ENCODE measurements at regions of chr4 and their contacts with region 1.

Region 1: DNA sequence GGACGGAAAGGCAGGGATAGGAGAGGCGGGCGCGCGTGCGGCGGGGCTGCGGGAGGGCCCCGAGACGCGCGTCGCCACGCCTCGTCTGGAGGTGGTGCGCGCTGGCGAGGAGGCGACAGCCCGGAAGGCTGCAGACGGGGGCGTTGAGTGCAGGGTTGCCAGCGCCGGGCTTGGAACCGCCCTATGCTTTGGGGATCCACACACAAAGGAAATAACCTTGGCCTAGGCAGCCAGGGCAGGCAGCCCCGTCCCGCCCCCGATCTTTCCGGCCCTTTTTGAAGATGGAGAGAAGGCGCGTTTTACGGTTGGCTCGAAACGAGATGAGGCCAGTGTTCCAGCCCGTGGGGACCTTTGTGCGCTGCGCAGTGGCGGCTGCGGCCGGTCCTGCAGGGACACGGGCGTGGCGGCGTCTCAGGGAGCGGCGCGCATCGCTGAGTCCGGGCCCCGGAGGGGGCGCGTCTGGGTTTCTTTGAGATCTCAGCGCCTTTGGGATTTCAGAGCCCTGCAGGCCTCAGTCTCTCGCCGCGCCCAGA is 50.8 kb upstream of the TRIM2 start:
- DNase-seq: peak; percentile 39 to 66 (median 48)
- ATAC-seq: peak in 3 of 4 donors; percentile 75 to 88 (median 85)
- H3K4me3 ChIP-seq: peak overlapping the region; percentile 48 to 68 (median 58)
- H3K27ac ChIP-seq: peak overlapping the region in 1 of 12 donors; percentile 10
- H3K4me1 ChIP-seq: peaks cover 0 to 27% (median 12%) of the 10 kb centered on the region in 12 donors
- H3K27me3 ChIP-seq: peaks cover 0 to 21% (median 0%) of the 10 kb centered on the region in 9 donors
- CTCF ChIP-seq: no peak
- POLR2A ChIP-seq: no peak

Region 2: GRCh38 chr4:151905197-151905596 is 1248.2 kb before region 1 on chr4:
- intact Hi-C with region 1: no loop called
- DNase-seq: no peak
- ATAC-seq: no peak
- H3K4me3 ChIP-seq: no peak overlapping the region
- H3K27ac ChIP-seq: no peak overlapping the region
- H3K4me1 ChIP-seq: no peaks in the 10 kb centered on the region
- H3K27me3 ChIP-seq: no peaks in the 10 kb centered on the region
- CTCF ChIP-seq: no peak
- POLR2A ChIP-seq: no peak

Region 3: GRCh38 chr4:152415980-152416379 is 737.4 kb before region 1 on chr4:
- intact Hi-C with region 1: no loop called
- DNase-seq: no peak
- ATAC-seq: no peak
- H3K4me3 ChIP-seq: no peak overlapping the region
- H3K27ac ChIP-seq: no peak overlapping the region
- H3K4me1 ChIP-seq: no peaks in the 10 kb centered on the region
- H3K27me3 ChIP-seq: no peaks in the 10 kb centered on the region
- CTCF ChIP-seq: no peak
- POLR2A ChIP-seq: no peak

Region 4: GRCh38 chr4:153204247-153205027 is 51.0 kb after region 1 on chr4 and contains the start of gene TRIM2:
- intact Hi-C with region 1: loop called in 2 of 10 experiments (anchors 5 kb)
- DNase-seq: peak; percentile 67 to 82 (median 72)
- ATAC-seq: peak; percentile 84 to 95 (median 87)
- H3K4me3 ChIP-seq: peak within 1 kb of the TSS in 11 of 12 donors; percentile 3 to 60 (median 40)
- H3K27ac ChIP-seq: peak within 1 kb of the TSS in 6 of 12 donors; percentile 10 to 63 (median 36)
- H3K4me1 ChIP-seq: peaks cover 0 to 14% (median 0%) of the 10 kb centered on the region in 12 donors
- H3K27me3 ChIP-seq: no peaks in the 10 kb centered on the region
- CTCF ChIP-seq: no peak
- POLR2A ChIP-seq: peak in 1 of 2 donors; percentile 50
- total RNA-seq, gene TRIM2: 13.0 to 30.5 (median 19.0) TPM

Region 5: DNA sequence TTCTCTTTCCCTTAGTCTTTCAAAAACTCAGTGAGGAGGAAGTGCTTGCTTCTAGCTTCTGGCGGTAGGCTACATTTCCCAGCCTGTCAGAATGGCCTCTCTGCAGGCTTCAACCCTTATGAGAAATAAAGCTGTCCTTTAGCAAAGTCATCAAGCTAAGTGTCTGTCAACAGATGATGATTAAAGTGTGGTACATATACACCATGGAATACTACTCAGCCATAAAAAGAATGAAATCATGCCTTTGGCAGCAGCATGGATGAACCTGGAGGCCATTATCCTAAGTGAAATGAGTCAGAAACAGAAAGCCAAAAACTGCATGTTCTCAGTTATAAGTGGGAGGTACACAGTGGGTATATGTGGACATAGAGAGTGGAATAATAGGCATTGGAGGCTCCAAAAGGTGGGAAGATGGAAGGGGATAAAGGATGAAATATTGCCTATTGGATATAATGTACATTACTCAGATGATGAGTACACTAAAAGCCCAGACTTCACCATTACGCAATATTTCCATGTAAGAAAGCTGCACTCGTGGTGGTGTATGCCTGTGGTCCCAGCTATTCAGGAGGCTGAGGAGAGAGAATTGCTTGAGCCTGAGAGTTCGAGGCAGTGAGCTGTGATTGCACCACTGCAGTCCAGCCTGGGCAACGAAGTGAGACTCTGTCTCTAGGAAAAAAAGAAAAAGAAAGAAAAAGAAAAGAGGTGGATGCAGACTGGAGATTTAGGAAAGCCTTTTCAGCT is 58.8 kb after region 1 on chr4:
- intact Hi-C with region 1: loop called in 3 of 10 experiments (anchors 5 to 10 kb)
- DNase-seq: no peak
- ATAC-seq: no peak
- H3K4me3 ChIP-seq: no peak overlapping the region
- H3K27ac ChIP-seq: no peak overlapping the region
- H3K4me1 ChIP-seq: peaks cover 0 to 41% (median 8%) of the 10 kb centered on the region in 12 donors
- H3K27me3 ChIP-seq: no peaks in the 10 kb centered on the region
- CTCF ChIP-seq: no peak
- POLR2A ChIP-seq: no peak

Region 6: GRCh38 chr4:153555730-153556433 is 402.5 kb after region 1 on chr4:
- intact Hi-C with region 1: no loop called
- DNase-seq: peak; percentile 84 to 93 (median 88)
- ATAC-seq: peak; percentile 88 to 90 (median 88)
- H3K4me3 ChIP-seq: peak overlapping the region in 4 of 12 donors; percentile 29 to 45 (median 34)
- H3K27ac ChIP-seq: peak overlapping the region in 11 of 12 donors; percentile 66 to 90 (median 80)
- H3K4me1 ChIP-seq: peaks cover 0 to 41% (median 8%) of the 10 kb centered on the region in 12 donors
- H3K27me3 ChIP-seq: no peaks in the 10 kb centered on the region
- CTCF ChIP-seq: no peak
- POLR2A ChIP-seq: no peak

Measured in heart left ventricle (tissue), 16 donors.